ENCODE measurements at regions of chr9 and their contacts with region 1.

Region 1: DNA sequence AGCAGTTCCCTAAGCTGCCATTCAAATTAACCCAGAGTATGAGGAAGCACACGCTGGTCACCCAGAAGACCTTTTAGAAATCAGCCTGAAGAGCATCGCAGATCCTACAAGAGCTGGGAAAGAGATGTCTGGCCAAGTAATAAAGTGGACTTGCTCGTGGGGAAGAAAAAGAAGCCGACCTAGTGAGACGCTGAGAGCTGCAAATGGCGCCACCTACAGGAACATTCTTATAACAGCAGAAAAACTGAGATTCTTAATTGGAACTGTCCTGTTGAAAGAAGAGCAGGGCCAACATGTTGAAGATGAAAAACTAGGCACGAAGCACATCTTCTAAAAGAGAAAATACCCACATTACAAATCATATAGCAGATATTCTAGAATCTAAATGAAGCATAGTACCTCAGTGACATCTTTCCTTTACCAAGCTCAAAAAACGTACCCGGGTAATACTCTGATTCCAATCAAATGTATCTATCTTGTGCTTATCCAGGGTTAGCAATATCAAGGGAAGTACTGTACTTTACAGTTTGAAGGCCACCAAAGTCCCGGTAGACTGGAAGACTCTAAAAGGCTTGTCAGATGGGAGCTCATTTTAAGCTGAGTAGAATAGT is 3.9 kb upstream of the GNAQ start:
- DNase-seq: peak; percentile 54
- H3K27ac ChIP-seq: no peak overlapping the region
- CTCF ChIP-seq: peak; percentile 86

Region 2: GRCh38 chr9:77811832-77812231 is 223.7 kb before region 1 on chr9:
- CTCF ChIA-PET with region 1: interaction called, 16 read pairs
- POLR2A ChIA-PET with region 1: no interaction called
- DNase-seq: no peak
- H3K27ac ChIP-seq: no peak overlapping the region
- CTCF ChIP-seq: no peak

Region 3: DNA sequence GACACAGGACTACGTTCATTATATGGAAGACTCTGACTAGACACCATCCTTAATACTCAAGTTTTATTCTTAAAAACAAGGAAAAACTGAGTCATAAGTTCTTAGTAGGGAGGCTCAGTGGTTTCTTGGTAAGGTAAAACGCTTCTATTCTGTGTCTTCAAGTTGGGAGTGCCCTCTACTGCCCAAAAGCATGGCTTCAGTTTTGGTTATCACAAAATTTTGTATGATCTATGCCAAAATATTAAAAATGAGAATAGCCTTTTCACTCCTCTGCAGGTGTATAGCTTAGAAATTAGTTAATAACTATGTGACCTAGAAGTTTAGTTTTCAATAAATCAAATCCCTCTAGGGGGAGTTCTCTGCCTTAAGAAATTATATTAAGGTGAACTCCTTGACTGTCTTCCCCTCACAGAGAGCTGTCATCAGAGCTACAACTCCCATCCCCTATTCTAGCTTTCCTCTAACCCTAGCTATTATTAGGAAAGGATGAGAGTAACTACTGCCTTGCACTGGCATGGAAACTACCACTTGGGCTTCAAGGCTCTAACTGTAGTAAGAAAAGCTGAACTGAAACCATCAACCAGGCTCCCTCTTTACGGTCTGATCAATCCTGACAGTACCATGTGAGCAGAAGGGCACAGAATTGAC is 193.6 kb before region 1 on chr9:
- CTCF ChIA-PET with region 1: interaction called, 12 read pairs
- POLR2A ChIA-PET with region 1: no interaction called
- DNase-seq: no peak
- H3K27ac ChIP-seq: no peak overlapping the region
- CTCF ChIP-seq: no peak; the same call in 1 of the 2 replicates

Region 4: DNA sequence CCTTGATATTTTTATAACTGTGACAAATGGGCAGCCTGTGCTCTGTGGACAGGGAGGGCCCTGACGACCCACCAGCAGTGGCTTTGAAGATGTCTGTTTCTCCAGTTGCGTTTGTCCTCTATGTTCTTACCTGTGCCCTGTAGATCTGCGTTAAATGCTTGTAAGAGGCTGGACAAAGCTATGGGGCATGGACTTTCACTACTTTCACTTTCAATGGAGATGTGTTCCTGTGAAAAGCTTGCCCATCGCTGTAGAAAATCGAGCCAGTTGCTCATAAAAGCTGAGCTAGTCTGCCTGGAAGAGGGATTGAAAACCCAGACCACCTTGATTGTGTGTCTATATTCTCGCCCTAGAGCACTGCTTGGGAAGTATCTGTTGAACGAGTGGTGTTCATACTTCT is 335.5 kb after region 1 on chr9:
- CTCF ChIA-PET with region 1: no interaction called
- POLR2A ChIA-PET with region 1: no interaction called
- DNase-seq: no peak
- H3K27ac ChIP-seq: no peak overlapping the region
- CTCF ChIP-seq: no peak

Measured in RWPE1 (cell line).